Natural killer cell (primary cell): ENCODE measurements at regions of chr3 and their contacts with region 1.

Region 1: GRCh38 chr3:143302638-143303171 is 183.1 kb downstream of the CHST2 start:
- DNase-seq: no peak
- ATAC-seq: no peak
- H3K4me3 ChIP-seq: no peak overlapping the region
- H3K4me3 Mint-ChIP-seq: peak overlapping the region; percentile 83
- H3K27ac ChIP-seq: no peak overlapping the region
- H3K27ac Mint-ChIP-seq: peak overlapping the region; percentile 80 to 84
- H3K4me1 ChIP-seq: peaks cover 58% of the 10 kb centered on the region
- H3K4me1 Mint-ChIP-seq: peaks cover 89 to 92% of the 10 kb centered on the region in 2 donors
- H3K27me3 ChIP-seq: no peaks in the 10 kb centered on the region
- H3K27me3 Mint-ChIP-seq: no peaks in the 10 kb centered on the region
- CTCF ChIP-seq: no peak

Region 2: GRCh38 chr3:143236226-143236964 is 66.3 kb before region 1 on chr3:
- intact Hi-C with region 1: loop called (anchors 1 kb)
- DNase-seq: no peak
- ATAC-seq: peak; percentile 54 to 66 (median 58)
- H3K4me3 ChIP-seq: no peak overlapping the region
- H3K4me3 Mint-ChIP-seq: peak overlapping the region; percentile 64
- H3K27ac ChIP-seq: peak overlapping the region; percentile 88
- H3K27ac Mint-ChIP-seq: peak overlapping the region; percentile 92 to 98
- H3K4me1 ChIP-seq: peaks cover 40% of the 10 kb centered on the region
- H3K4me1 Mint-ChIP-seq: peaks cover 72 to 78% of the 10 kb centered on the region in 2 donors
- H3K27me3 ChIP-seq: no peaks in the 10 kb centered on the region
- H3K27me3 Mint-ChIP-seq: no peaks in the 10 kb centered on the region
- CTCF ChIP-seq: no peak

Region 3: GRCh38 chr3:143276592-143276991 is 26.1 kb before region 1 on chr3:
- intact Hi-C with region 1: loop called (anchors 1 kb)
- DNase-seq: no peak
- ATAC-seq: no peak
- H3K4me3 ChIP-seq: no peak overlapping the region
- H3K4me3 Mint-ChIP-seq: peak overlapping the region; percentile 68
- H3K27ac ChIP-seq: no peak overlapping the region
- H3K27ac Mint-ChIP-seq: peak overlapping the region; percentile 17 to 62
- H3K4me1 ChIP-seq: peaks cover 49% of the 10 kb centered on the region
- H3K4me1 Mint-ChIP-seq: peaks cover 72 to 84% of the 10 kb centered on the region in 2 donors
- H3K27me3 ChIP-seq: no peaks in the 10 kb centered on the region
- H3K27me3 Mint-ChIP-seq: no peaks in the 10 kb centered on the region
- CTCF ChIP-seq: no peak

Region 4: GRCh38 chr3:143348486-143349327 is 46.0 kb after region 1 on chr3:
- intact Hi-C with region 1: loop called (anchors 5 kb)
- DNase-seq: peak in 1 of 2 donors; percentile 13
- ATAC-seq: peak in 2 of 3 donors; percentile 64 to 65
- H3K4me3 ChIP-seq: no peak overlapping the region
- H3K4me3 Mint-ChIP-seq: peak overlapping the region; percentile 38
- H3K27ac ChIP-seq: no peak overlapping the region
- H3K27ac Mint-ChIP-seq: peak overlapping the region; percentile 58 to 64
- H3K4me1 ChIP-seq: peaks cover 12% of the 10 kb centered on the region
- H3K4me1 Mint-ChIP-seq: peaks cover 31 to 53% of the 10 kb centered on the region in 2 donors
- H3K27me3 ChIP-seq: no peaks in the 10 kb centered on the region
- H3K27me3 Mint-ChIP-seq: no peaks in the 10 kb centered on the region
- CTCF ChIP-seq: no peak